Naive thymus-derived CD4-positive, alpha-beta T cell (primary cell): ENCODE measurements at regions of chr6 and their contacts with region 1.

Region 1: GRCh38 chr6:99416892-99417767 is 8.0 kb downstream of the PNISR start:
- DNase-seq: no peak
- ATAC-seq: peak; percentile 38
- H3K4me3 ChIP-seq: no peak overlapping the region
- H3K4me3 Mint-ChIP-seq: peak overlapping the region in 9 of 10 donors; percentile 29 to 65 (median 49)
- H3K27ac ChIP-seq: no peak overlapping the region
- H3K27ac Mint-ChIP-seq: peak overlapping the region in 2 of 9 donors; percentile 21 to 83
- H3K4me1 ChIP-seq: peaks cover 32 to 40% of the 10 kb centered on the region in 2 donors
- H3K4me1 Mint-ChIP-seq: peaks cover 36 to 89% (median 79%) of the 10 kb centered on the region in 7 donors
- H3K27me3 ChIP-seq: no peaks in the 10 kb centered on the region
- H3K27me3 Mint-ChIP-seq: no peaks in the 10 kb centered on the region

Region 2: DNA sequence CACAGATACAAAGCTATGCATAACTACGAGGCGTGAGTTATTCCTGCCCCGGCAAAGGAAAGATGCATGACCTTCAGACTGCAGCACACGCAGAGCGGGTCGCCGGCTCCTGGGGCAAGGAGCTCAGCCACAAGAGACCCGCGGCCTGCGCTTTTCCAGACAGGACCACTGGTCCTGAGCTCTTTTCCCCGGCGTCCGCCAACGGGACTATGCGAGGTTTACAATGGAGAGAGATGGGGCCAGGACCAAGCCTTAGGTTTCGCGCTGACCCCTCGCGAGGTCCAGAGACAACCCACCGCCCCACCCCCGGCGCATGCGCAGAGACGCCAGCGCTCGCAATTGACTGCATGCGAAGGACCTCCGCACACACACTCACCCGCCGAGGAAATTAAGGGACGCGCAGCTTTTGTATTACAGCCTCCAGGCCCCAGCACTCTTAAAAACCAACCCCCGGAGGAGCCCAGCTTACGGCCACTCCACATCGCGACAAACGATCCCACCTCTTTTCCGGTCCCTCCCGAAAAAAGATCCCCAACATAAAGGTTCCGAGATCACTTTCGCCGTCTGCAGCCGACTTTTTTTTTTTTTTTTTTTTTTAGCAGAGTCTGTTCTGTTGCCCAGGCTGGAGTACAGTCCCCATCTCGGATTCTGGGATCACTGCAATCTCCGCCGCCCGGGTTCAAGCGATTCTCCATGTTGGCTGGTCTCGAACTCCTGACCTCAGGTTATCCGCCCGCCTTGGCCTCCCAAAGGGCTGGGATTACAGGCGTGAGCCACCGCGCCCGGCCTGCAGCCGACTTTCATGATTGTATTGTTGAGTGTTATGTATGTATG is 23.2 kb before region 1 on chr6 and contains the start of gene COQ3:
- CTCF ChIA-PET with region 1: no interaction called
- POLR2A ChIA-PET with region 1: interaction called, 4 read pairs
- intact Hi-C with region 1: loop called in 1 of 2 experiments (anchors 2 kb)
- DNase-seq: peak; percentile 48 to 79 (median 57)
- ATAC-seq: peak; percentile 65
- H3K4me3 ChIP-seq: peak within 1 kb of the TSS; percentile 77
- H3K4me3 Mint-ChIP-seq: peak within 1 kb of the TSS; percentile 89 to 97 (median 93)
- H3K27ac ChIP-seq: peak within 1 kb of the TSS; percentile 75
- H3K27ac Mint-ChIP-seq: peak within 1 kb of the TSS; percentile 72 to 95 (median 93)
- H3K4me1 ChIP-seq: peaks cover 0 to 3% of the 10 kb centered on the region in 2 donors
- H3K4me1 Mint-ChIP-seq: peaks cover 13 to 31% (median 21%) of the 10 kb centered on the region in 7 donors
- H3K27me3 ChIP-seq: no peaks in the 10 kb centered on the region
- H3K27me3 Mint-ChIP-seq: no peaks in the 10 kb centered on the region
- total RNA-seq, gene COQ3: 1.8 to 7.3 (median 4.2) TPM

Region 3: DNA sequence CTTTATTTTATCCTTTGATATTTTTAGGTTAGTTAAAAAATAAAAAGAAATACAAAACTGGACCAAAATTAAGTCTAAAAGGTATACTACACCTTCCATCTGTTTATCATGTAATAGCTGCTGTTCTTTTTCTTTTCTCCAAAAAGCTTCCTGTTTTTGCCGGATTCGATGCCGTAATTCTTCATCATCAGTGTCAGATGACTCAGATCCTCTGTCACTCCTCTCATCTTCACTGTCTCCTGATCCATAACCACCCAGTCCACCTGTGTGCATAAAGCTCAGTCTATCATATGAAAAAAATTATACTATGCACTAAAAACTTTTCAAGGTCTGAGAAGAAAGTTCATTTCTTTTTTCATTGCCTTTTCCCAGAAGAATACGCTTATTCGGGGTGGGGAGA is 14.7 kb before region 1 on chr6:
- CTCF ChIA-PET with region 1: no interaction called
- POLR2A ChIA-PET with region 1: interaction called, 4 read pairs
- intact Hi-C with region 1: loop called (anchors 2 kb)
- DNase-seq: no peak
- ATAC-seq: no peak
- H3K4me3 ChIP-seq: no peak overlapping the region
- H3K4me3 Mint-ChIP-seq: no peak overlapping the region
- H3K27ac ChIP-seq: no peak overlapping the region
- H3K27ac Mint-ChIP-seq: peak overlapping the region in 1 of 9 donors; percentile 5
- H3K4me1 ChIP-seq: no peaks in the 10 kb centered on the region
- H3K4me1 Mint-ChIP-seq: peaks cover 0 to 2% (median 0%) of the 10 kb centered on the region in 7 donors
- H3K27me3 ChIP-seq: no peaks in the 10 kb centered on the region
- H3K27me3 Mint-ChIP-seq: no peaks in the 10 kb centered on the region